ENCODE measurements at regions of chr19 and their contacts with region 1.

Region 1: DNA sequence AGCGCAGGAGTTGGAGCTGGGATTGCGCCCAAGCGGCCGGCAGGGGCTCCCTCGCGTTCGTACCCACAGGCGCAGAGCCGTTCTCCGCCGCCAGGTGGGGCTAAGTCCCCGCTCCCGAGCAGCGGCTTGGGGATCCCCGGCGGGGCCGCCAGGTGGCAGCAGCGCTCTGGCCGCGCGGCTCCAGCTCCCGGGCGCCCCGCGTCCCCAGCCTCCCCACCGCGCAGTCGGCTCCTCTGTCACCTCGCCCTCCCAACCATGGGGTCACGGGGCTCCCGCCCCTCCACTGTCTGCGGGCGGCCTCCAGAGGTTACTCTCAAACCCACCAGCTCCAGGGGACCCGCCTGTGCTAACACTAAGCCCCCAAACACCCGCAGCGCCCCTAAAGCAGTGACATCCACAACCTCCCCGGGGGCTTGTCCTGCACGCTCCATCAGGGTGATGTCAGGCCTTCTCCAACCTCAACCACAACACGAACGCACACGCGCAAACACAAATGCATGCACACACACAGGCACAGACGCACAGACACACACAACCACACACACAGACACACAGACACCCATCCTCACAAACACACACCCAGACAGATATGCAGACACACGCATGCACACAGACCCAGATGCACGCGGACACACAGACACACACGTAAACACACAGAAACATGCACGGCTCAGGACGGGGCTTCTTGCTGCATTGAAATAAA is 18.4 kb upstream of the KCTD15 start:
- DNase-seq: peak; percentile 87 to 96 (median 94)
- ATAC-seq: peak; percentile 97
- H3K4me3 ChIP-seq: no peak overlapping the region
- H3K27ac ChIP-seq: no peak overlapping the region
- H3K4me1 ChIP-seq: peaks cover 0 to 24% of the 10 kb centered on the region in 2 experiments; a peak in 2 of 5 replicates
- H3K27me3 ChIP-seq: peaks cover 16 to 42% of the 10 kb centered on the region in 2 experiments; a peak in 4 of 5 replicates
- CTCF ChIP-seq: peak; percentile 100
- EP300 ChIP-seq: no peak
- POLR2A ChIP-seq: no peak
- RAD21 ChIP-seq: peak; percentile 99 to 100

Region 2: DNA sequence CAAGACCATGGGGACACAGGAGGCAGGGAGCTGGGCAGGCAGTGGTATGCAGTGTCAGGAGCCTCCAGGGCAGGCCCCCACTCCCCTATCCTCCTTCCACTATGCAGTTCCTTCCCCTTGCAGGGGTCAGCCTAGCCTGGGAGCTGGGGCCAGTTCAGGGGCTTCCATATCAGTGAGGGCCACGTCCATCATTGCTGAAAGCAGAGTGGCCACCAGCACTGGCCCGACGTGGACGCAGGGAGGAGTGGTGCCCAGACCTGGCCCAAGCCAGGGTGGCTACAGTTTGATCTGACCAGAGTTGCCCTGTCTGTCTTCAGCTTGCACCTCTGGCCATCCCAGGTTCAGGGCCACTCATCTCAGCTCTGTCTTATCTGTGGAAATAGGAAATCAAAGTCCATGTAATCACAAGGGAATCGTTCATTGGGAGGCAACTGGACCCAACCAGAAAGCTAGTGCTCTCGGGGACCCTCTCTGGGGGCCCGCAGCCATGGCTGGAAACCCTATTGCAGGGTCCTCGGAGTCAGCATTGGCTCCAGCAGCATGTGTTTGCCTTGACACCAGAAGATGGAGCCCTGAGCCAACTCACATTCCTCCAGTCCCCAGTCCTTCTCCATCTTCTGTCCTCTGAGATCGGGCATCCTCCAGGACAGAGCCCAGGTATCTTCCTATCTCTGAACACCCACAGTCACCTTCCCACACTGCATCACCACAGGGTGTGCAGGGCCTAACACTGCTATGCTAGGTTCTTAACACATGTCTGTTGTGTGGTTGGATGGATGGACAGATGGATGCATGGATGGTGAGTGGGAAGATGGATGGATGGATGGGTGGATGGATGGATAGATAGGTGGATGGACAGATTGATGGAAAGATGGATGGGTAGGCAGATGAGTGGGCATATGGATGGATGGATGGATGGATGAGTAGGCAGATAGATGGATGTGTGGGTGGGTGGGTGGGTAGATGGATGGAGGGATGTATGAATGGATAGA is 57.3 kb before region 1 on chr19:
- CTCF ChIA-PET with region 1: no interaction called
- POLR2A ChIA-PET with region 1: no interaction called
- in situ Hi-C with region 1: no loop called
- intact Hi-C with region 1: loop called (anchors 10 kb)
- DNase-seq: peak; percentile 20 to 30 (median 24)
- ATAC-seq: 0 out of 3 replicates have a peak, but pooled peaks have one; percentile 34
- H3K4me3 ChIP-seq: no peak overlapping the region
- H3K27ac ChIP-seq: no peak overlapping the region
- H3K4me1 ChIP-seq: no peaks in the 10 kb centered on the region
- H3K27me3 ChIP-seq: peaks cover 0 to 6% of the 10 kb centered on the region in 2 experiments; a peak in 3 of 5 replicates
- CTCF ChIP-seq: peak; percentile 33 to 49 (median 37); a peak in 4 of 6 replicates
- EP300 ChIP-seq: no peak
- POLR2A ChIP-seq: no peak
- RAD21 ChIP-seq: peak in 1 of 2 experiments; percentile 49; a peak in 2 of 4 replicates

Region 3: GRCh38 chr19:33804021-33804799 is 26.0 kb after region 1 on chr19:
- CTCF ChIA-PET with region 1: no interaction called
- POLR2A ChIA-PET with region 1: no interaction called
- in situ Hi-C with region 1: no loop called
- intact Hi-C with region 1: no loop called
- DNase-seq: no peak
- ATAC-seq: no peak
- H3K4me3 ChIP-seq: no peak overlapping the region
- H3K27ac ChIP-seq: no peak overlapping the region
- H3K4me1 ChIP-seq: peaks cover 0 to 6% of the 10 kb centered on the region in 2 experiments; a peak in 2 of 5 replicates
- H3K27me3 ChIP-seq: no peaks in the 10 kb centered on the region
- CTCF ChIP-seq: no peak
- EP300 ChIP-seq: no peak
- POLR2A ChIP-seq: no peak
- RAD21 ChIP-seq: no peak

Region 4: GRCh38 chr19:34096020-34096915 is 318.0 kb after region 1 on chr19:
- CTCF ChIA-PET with region 1: interaction called, 111 read pairs
- POLR2A ChIA-PET with region 1: no interaction called
- in situ Hi-C with region 1: loop called (anchors 5 kb)
- intact Hi-C with region 1: loop called (anchors 1 kb)
- DNase-seq: peak; percentile 44 to 65 (median 50)
- ATAC-seq: peak; percentile 78
- H3K4me3 ChIP-seq: no peak overlapping the region
- H3K27ac ChIP-seq: no peak overlapping the region
- H3K4me1 ChIP-seq: no peaks in the 10 kb centered on the region
- H3K27me3 ChIP-seq: peaks cover 0 to 6% of the 10 kb centered on the region in 2 experiments; a peak in 3 of 5 replicates
- CTCF ChIP-seq: peak; percentile 55 to 91 (median 81); a peak in 5 of 6 replicates
- EP300 ChIP-seq: no peak
- POLR2A ChIP-seq: no peak
- RAD21 ChIP-seq: peak; percentile 78 to 95

Region 5: GRCh38 chr19:34220472-34221063 is 442.3 kb after region 1 on chr19:
- CTCF ChIA-PET with region 1: interaction called, 13 read pairs
- POLR2A ChIA-PET with region 1: no interaction called
- in situ Hi-C with region 1: no loop called
- intact Hi-C with region 1: no loop called
- DNase-seq: peak; percentile 52 to 84 (median 68)
- ATAC-seq: peak; percentile 78
- H3K4me3 ChIP-seq: no peak overlapping the region
- H3K27ac ChIP-seq: no peak overlapping the region
- H3K4me1 ChIP-seq: peaks cover 9 to 18% of the 10 kb centered on the region in 2 experiments
- H3K27me3 ChIP-seq: no peaks in the 10 kb centered on the region
- CTCF ChIP-seq: peak; percentile 68 to 75 (median 70)
- EP300 ChIP-seq: no peak
- POLR2A ChIP-seq: no peak
- RAD21 ChIP-seq: peak in 1 of 2 experiments; percentile 71; a peak in 3 of 4 replicates

Region 6: DNA sequence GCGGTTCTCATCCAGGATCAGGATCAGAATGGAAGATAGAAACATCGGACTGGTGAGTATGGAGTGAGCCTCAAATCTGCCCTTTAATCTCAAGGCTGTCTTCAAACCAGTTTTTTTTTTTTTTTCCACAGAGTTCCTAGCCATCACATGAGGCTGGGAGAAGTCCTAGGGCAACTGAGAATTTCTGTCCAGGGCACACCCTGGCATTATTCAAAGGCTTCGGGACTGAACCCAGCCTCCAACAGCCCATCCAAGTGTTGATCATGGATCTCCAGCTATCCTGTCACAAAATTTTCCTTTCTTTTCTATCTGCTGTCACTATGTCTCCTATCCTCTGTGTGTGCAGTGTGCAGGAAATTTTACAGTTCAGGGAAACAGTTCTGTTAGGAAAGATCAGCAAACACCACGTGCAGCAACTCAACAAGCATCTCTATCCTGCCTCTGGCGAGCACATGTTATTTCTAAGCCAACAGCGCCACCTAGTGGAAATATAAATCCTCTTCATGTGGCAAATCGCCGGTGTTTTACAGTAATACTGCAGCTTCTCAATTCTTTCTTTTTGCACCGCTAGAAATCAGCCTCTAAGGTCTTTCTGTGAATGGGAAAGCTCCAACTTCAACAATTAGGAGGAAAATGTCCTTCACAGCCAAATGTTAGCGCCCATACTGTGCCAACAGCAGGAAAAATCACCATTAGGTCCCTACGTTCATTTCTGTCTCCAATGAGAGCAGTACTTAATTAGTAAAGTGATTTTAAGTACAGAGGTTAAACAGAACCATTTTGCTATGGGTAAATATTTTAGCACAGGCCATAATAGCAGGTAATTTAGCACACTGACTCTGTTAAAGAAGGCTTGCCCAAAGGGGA is 934.4 kb after region 1 on chr19:
- CTCF ChIA-PET with region 1: interaction called, 29 read pairs
- POLR2A ChIA-PET with region 1: no interaction called
- in situ Hi-C with region 1: loop called (anchors 5 kb)
- intact Hi-C with region 1: no loop called
- DNase-seq: peak; percentile 64 to 84 (median 64)
- ATAC-seq: peak; percentile 92
- H3K4me3 ChIP-seq: no peak overlapping the region
- H3K27ac ChIP-seq: no peak overlapping the region
- H3K4me1 ChIP-seq: peaks cover 0 to 4% of the 10 kb centered on the region in 2 experiments; a peak in 2 of 5 replicates
- H3K27me3 ChIP-seq: 0 out of 5 replicates have a peak, but pooled peaks cover 0 to 4% of the 10 kb centered on the region in 2 experiments
- CTCF ChIP-seq: peak; percentile 71 to 91 (median 83)
- EP300 ChIP-seq: no peak
- POLR2A ChIP-seq: no peak
- RAD21 ChIP-seq: peak; percentile 73 to 89

Measured in K562 (cell line).